Natural killer cell (primary cell): ENCODE measurements at regions of chr3 and their contacts with region 1.

Region 1: GRCh38 chr3:137013955-137014688 is 56.3 kb downstream of the IL20RB start:
- DNase-seq: peak; percentile 81 to 91
- ATAC-seq: peak; percentile 86 to 97 (median 96)
- H3K4me3 ChIP-seq: peak overlapping the region; percentile 7
- H3K4me3 Mint-ChIP-seq: peak overlapping the region; percentile 67
- H3K27ac ChIP-seq: no peak overlapping the region
- H3K27ac Mint-ChIP-seq: peak overlapping the region in 1 of 2 donors; percentile 85
- H3K4me1 ChIP-seq: peaks cover 10% of the 10 kb centered on the region
- H3K4me1 Mint-ChIP-seq: peaks cover 10% of the 10 kb centered on the region in 2 donors
- H3K27me3 ChIP-seq: no peaks in the 10 kb centered on the region
- H3K27me3 Mint-ChIP-seq: no peaks in the 10 kb centered on the region
- CTCF ChIP-seq: peak; percentile 93

Region 2: DNA sequence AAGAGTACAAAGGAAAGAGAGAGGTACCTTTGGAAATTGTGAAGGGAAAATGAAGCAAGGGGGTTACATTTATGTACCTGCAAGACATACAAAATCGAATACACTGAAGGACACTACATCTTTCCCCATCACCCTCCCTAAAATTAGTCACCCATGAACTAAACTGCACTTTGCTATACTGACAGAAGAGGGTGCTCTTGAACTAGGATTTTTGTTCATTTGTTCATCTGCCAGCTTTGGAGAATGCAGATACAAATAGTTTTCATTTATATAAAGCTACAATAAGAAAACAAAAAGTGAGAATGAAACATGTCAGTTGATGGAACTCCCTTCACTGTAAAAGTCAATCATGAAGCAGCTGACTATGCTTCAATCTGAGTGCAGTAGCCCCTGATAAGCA is 708.2 kb before region 1 on chr3:
- intact Hi-C with region 1: loop called (anchors 1 kb)
- DNase-seq: no peak
- ATAC-seq: peak; percentile 48 to 64 (median 50)
- H3K4me3 ChIP-seq: no peak overlapping the region
- H3K4me3 Mint-ChIP-seq: no peak overlapping the region
- H3K27ac ChIP-seq: no peak overlapping the region
- H3K27ac Mint-ChIP-seq: no peak overlapping the region
- H3K4me1 ChIP-seq: no peaks in the 10 kb centered on the region
- H3K4me1 Mint-ChIP-seq: no peaks in the 10 kb centered on the region
- H3K27me3 ChIP-seq: no peaks in the 10 kb centered on the region
- H3K27me3 Mint-ChIP-seq: no peaks in the 10 kb centered on the region
- CTCF ChIP-seq: peak; percentile 60

Region 3: DNA sequence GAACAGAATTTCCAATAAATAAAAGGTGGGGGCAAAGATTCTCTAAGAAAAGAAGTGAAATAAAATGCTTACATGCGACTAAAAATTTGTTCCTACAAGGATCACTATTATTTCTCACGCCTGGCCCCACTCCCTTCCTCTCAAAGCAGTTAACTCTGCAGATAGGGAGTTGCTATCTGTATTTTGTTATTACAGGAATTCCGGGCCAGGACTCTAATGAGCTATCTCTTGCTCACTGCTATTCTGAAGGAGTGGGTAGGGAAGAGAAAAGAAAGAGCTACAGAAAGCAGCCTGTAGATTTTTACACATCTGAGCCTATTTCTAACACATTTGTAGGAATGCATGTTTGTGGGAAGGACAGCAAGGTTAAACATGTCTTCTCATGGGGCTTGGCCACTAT is 623.5 kb before region 1 on chr3:
- intact Hi-C with region 1: loop called (anchors 1 kb)
- DNase-seq: no peak
- ATAC-seq: no peak
- H3K4me3 ChIP-seq: no peak overlapping the region
- H3K4me3 Mint-ChIP-seq: no peak overlapping the region
- H3K27ac ChIP-seq: no peak overlapping the region
- H3K27ac Mint-ChIP-seq: no peak overlapping the region
- H3K4me1 ChIP-seq: no peaks in the 10 kb centered on the region
- H3K4me1 Mint-ChIP-seq: no peaks in the 10 kb centered on the region
- H3K27me3 ChIP-seq: no peaks in the 10 kb centered on the region
- H3K27me3 Mint-ChIP-seq: no peaks in the 10 kb centered on the region
- CTCF ChIP-seq: no peak

Region 4: DNA sequence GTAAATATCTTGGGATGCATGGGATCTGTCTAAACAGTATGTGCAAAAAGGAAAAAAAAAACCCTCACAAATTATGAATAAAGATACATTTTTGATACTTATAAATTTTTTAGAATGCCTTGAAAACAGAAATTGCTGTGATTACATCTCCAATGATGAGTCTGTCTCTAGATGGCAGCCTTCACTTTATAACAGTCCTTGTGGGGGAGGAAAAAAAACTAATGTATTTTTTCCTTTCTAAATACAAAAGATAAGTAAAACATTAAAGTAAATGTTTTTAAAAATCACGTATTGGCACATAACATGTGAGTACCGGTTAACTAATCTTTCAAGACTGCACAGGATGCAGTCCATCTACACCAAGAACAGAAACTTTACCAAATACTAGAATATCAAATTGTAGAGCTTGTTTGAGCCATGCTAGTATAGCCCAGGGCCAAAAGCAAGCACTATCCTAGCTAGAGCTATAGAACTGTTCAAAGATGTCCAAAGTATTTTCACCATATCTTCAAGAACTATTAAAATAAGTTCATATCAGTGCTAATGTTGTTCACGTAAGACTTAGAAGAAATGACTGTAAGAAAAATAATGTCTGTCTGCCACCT is 468.4 kb before region 1 on chr3:
- intact Hi-C with region 1: loop called (anchors 1 kb)
- DNase-seq: peak in 1 of 2 donors; percentile 7
- ATAC-seq: peak in 1 of 3 donors; percentile 30
- H3K4me3 ChIP-seq: no peak overlapping the region
- H3K4me3 Mint-ChIP-seq: no peak overlapping the region
- H3K27ac ChIP-seq: no peak overlapping the region
- H3K27ac Mint-ChIP-seq: peak overlapping the region; percentile 8 to 65
- H3K4me1 ChIP-seq: no peaks in the 10 kb centered on the region
- H3K4me1 Mint-ChIP-seq: peaks cover 11 to 25% of the 10 kb centered on the region in 2 donors
- H3K27me3 ChIP-seq: no peaks in the 10 kb centered on the region
- H3K27me3 Mint-ChIP-seq: no peaks in the 10 kb centered on the region
- CTCF ChIP-seq: no peak

Region 5: GRCh38 chr3:137105277-137105977 is 91.3 kb after region 1 on chr3:
- intact Hi-C with region 1: no loop called
- DNase-seq: peak in 1 of 2 donors; percentile 65
- ATAC-seq: peak in 1 of 3 donors; percentile 58
- H3K4me3 ChIP-seq: no peak overlapping the region
- H3K4me3 Mint-ChIP-seq: no peak overlapping the region
- H3K27ac ChIP-seq: no peak overlapping the region
- H3K27ac Mint-ChIP-seq: no peak overlapping the region
- H3K4me1 ChIP-seq: no peaks in the 10 kb centered on the region
- H3K4me1 Mint-ChIP-seq: no peaks in the 10 kb centered on the region
- H3K27me3 ChIP-seq: no peaks in the 10 kb centered on the region
- H3K27me3 Mint-ChIP-seq: peaks cover 16 to 20% of the 10 kb centered on the region in 2 donors
- CTCF ChIP-seq: peak; percentile 53